ENCODE measurements at regions of chr1 and their contacts with region 1.

Region 1: GRCh38 chr1:27044613-27045151 is 32.0 kb upstream of the TENT5B start:
- DNase-seq: peak; percentile 83 to 96 (median 94)
- ATAC-seq: peak; percentile 97
- H3K4me3 ChIP-seq: no peak overlapping the region
- H3K4me1 ChIP-seq: peaks cover 6% of the 10 kb centered on the region
- CTCF ChIP-seq: peak; percentile 98

Region 2: DNA sequence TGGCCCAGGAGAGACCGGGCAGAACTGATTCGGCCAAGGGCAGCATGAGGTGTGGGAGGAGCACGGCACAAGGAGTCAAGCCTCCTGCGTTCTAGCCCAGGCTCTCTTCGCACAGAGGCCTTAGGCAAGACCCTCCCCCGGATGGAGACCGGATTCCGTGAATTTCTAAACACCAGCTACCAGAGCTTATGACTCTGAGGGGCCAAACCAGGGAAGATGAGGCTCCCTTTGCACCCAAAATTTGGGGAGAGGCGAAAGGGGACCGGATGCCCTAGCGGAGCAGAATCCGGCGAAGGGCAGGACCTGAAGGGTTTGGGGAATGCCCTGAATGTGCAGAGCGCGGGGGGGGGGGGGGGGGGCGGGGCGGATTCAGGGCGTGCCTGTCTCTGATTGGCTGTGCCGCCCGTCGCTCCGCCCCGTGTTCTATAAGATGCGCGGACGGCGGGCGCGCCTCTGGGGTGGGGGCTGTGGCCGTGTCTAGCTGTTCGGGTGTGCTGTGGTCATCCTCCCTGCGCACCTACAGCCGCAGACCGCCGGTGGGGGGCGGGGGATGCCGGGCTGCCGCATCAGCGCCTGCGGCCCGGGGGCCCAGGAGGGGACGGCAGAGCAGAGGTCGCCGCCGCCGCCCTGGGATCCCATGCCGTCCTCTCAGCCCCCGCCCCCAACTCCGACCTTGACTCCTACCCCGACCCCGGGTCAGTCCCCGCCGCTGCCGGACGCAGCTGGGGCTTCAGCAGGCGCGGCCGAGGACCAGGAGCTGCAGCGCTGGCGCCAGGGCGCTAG is 51.3 kb before region 1 on chr1 and contains the start of gene TRNP1:
- intact Hi-C with region 1: loop called in 1 of 2 experiments (anchors 10 kb)
- DNase-seq: peak; percentile 71 to 82 (median 73)
- ATAC-seq: peak; percentile 64
- H3K4me3 ChIP-seq: peak within 1 kb of the TSS; percentile 19
- H3K4me1 ChIP-seq: peaks cover 15% of the 10 kb centered on the region
- CTCF ChIP-seq: no peak
- total RNA-seq, gene TRNP1: 1.0 to 16.8 (median 3.0) TPM

Region 3: DNA sequence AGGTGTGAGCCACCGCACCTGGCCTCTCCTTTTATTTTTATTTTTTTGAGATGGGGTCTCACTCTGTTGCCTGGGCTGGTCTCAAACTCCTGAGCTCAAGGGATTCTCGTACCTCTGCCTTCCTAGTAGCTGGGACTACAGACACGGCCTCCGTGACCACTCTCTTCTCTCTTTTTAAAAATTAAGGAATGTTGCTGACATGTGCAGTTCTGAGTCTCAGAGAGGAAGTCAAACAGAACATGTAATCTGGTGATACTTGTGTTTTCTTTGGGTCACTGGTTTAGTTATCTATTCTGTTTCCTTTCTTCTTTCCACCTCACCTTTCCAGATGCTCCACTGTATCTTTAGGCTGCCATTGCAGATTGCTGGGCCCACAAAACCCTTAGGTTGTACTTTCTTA is 192.4 kb after region 1 on chr1:
- intact Hi-C with region 1: no loop called
- DNase-seq: no peak
- ATAC-seq: no peak
- H3K4me3 ChIP-seq: no peak overlapping the region
- H3K4me1 ChIP-seq: peaks cover 5% of the 10 kb centered on the region
- CTCF ChIP-seq: no peak

Measured in mucosa of descending colon (tissue), 3 donors.